GM10248 (cell line): ENCODE measurements at regions of chr6 and their contacts with region 1.

Region 1: DNA sequence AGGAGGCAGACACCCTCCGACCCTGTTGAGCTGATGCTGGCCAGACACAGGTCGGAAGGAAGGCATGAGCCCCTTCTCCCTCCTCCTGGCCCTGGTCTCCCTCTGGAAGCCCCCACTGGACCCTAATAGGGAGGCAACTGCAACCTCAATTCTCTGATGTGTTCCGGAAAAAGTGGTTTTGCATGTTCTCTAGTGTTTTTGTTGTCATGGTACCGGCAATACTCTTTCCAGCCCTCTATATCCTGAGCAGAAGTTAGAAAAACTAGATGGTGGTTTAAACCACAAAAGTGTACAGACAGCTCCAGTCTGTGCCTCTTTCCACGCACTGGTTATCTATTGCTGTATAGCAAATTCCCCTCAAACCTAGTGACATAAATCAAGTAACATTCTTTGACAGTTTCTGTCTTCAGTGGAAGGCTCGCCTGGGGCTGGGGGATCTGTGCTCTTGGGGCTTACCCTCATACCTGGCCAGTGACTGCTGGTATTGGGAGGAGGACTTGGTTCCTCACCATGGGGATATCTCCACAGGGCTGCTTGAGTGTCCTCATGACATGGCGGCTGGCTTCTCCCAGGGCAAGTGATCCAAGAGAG is 37.0 kb downstream of the SYTL3 start:
- DNase-seq: peak; percentile 46
- CTCF ChIP-seq: no peak

Region 2: DNA sequence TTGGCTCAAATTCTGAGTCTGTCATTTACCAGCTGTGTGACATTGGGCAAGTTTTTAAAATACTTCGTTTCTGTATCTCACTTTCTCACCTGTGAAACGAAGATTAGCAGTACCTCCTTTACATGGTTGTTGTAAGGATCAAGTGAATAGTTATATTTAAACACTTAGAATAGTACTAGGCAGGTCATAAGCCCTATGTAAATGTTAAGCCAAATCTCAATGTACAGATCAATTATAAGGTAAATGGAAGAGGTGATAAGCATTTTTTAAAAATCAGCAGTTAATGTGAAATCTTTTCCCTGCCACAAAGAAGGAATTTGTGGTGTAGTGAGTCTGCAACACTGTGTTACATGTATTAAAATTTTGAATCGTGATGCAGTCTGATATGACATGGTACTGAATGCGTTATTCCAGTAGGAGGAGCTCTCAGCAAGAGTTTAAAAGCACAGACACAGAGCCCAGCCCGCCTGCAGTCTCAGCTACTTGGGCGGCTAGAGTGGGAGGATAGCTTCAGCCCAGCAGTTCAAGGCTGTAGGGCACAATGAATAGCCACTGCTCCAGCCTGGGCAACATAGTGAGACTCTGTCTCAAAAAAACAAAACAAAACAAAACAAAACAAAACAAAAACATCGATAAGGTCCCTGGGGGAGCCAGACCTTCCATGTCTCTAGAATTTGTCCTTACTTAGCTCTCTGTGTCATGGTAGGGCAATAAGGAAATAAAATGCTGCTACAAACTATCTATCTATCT is 472.8 kb before region 1 on chr6:
- CTCF ChIA-PET with region 1: interaction called, 39 read pairs
- POLR2A ChIA-PET with region 1: no interaction called
- DNase-seq: peak; percentile 73
- CTCF ChIP-seq: peak; percentile 83

Region 3: GRCh38 chr6:158488065-158488464 is 198.8 kb before region 1 on chr6:
- CTCF ChIA-PET with region 1: no interaction called
- POLR2A ChIA-PET with region 1: no interaction called
- DNase-seq: no peak
- CTCF ChIP-seq: no peak

Region 4: DNA sequence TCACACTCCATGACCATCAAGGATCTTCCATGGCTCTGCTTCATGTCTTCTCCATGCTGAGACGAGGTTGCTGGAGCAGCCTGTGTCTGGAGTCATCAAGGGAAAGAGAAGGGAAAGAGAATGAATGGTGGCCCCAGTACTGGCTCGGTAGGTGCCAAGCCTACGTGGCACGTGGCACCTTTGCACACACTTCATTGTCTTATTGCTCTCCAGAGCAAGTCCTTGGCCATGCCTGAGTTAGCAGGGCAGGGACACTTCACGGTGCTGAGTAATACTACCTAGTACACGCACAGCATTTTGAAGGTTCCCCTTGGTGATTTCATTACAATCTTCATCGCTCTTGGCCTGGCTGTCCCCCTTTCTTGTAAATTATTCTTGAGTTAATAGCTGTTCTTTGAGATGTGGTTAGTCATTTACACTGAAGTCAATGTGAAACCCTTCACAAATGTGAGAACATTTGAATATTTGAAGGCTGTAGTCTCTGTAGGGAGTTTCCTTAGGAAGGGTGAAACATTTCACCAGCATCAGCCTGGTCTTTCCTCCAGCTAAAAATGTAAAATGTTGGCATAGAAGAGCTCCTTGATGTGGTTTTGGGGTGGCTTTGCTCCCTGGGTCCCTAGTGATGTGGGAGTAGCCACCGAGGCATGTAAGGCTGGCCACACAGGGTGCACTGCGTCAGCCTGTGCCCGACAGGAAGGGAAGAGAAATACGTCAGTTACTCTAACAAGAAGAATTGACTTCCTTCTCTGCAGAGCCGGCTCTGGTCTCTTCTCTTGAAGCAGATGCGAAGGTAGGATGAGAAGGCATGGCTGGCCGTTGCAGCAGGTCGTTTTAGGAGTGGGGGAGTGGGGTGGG is 37.4 kb before region 1 on chr6 and contains the start of gene SYTL3:
- CTCF ChIA-PET with region 1: interaction called, 22 read pairs
- POLR2A ChIA-PET with region 1: no interaction called
- DNase-seq: peak; percentile 53
- CTCF ChIP-seq: no peak

Region 5: DNA sequence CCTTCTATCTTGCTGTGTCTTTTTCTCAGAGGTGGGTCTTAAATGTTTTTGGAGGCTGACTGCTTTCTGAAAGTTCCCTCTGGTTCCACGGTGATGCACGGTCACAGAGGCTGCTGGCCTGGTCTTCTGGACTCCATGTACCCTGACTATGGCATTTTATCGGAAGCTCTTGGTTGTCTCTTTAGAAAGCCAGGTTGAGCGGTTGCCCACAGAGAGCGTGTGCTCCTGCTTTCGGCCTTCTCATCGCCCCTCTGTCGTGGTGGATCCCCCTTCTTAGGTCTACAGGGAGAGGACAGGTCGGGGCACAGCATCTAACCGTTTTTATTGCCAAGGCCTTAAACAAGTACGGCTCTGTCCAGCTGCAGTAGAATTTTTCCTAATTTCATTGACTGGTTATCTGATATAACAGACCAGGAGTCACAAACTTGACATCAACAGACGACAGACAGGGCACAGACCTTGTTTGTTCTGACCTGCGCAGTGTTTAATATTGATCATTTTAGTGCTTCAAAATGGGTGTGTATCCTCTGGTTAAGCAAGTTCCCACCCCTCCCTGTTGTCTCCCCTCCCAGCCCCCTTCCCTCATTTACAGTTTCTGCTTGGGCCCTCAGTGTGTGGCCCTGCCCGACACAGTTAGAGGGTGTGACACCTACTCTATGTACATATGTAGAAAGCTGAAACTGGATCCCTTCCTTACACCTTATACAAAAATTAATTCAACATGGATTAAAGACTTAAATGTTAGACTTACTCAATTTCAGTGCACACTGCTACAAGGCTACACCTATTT is 12.3 kb before region 1 on chr6:
- CTCF ChIA-PET with region 1: interaction called, 18 read pairs
- POLR2A ChIA-PET with region 1: no interaction called
- DNase-seq: no peak
- CTCF ChIP-seq: no peak

Region 6: GRCh38 chr6:158711264-158711663 is 24.4 kb after region 1 on chr6:
- CTCF ChIA-PET with region 1: interaction called, 12 read pairs
- POLR2A ChIA-PET with region 1: no interaction called
- DNase-seq: no peak
- CTCF ChIP-seq: no peak

Region 7: GRCh38 chr6:158826801-158827573 is 140.1 kb after region 1 on chr6:
- CTCF ChIA-PET with region 1: no interaction called
- POLR2A ChIA-PET with region 1: no interaction called
- DNase-seq: peak; percentile 49
- CTCF ChIP-seq: no peak